ENCODE measurements at regions of chr20 and their contacts with region 1.

Region 1: DNA sequence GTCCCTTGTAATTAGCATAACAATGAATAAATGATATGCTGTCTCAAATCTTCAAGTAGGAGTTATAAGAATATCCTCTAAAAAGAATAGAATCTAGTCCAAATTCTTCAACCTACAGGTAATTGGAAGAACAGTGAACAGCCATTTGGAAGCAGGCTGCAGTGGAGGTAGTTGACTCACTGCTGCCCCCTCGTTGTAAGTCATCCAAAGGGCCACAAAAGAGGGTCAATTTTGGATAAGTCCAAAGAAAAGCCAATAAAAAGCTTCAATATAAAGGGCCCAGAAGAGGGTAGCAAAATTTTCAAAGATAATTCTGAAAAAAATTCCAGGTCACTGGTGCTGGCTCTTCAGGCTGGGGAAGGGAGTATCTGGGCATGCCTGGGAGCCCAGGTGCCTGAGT is 60.8 kb upstream of the SSTR4 start:
- DNase-seq: peak; percentile 24
- ATAC-seq: peak; percentile 69
- H3K4me3 ChIP-seq: no peak overlapping the region
- H3K27ac ChIP-seq: no peak overlapping the region
- H3K4me1 ChIP-seq: no peaks in the 10 kb centered on the region
- H3K27me3 ChIP-seq: no peaks in the 10 kb centered on the region; a peak in 1 of 5 replicates
- CTCF ChIP-seq: peak; percentile 32; the same call in 1 of the 2 replicates
- EP300 ChIP-seq: no peak
- POLR2A ChIP-seq: no peak
- RAD21 ChIP-seq: peak; percentile 44; the same call in 1 of the 2 replicates

Region 2: GRCh38 chr20:22333885-22334545 is 640.3 kb before region 1 on chr20:
- CTCF ChIA-PET with region 1: no interaction called
- POLR2A ChIA-PET with region 1: no interaction called
- in situ Hi-C with region 1: loop called (anchors 25 kb)
- intact Hi-C with region 1: loop called (anchors 5 kb)
- DNase-seq: peak; percentile 71
- ATAC-seq: peak; percentile 92
- H3K4me3 ChIP-seq: no peak overlapping the region
- H3K27ac ChIP-seq: no peak overlapping the region
- H3K4me1 ChIP-seq: no peaks in the 10 kb centered on the region
- H3K27me3 ChIP-seq: peaks cover 4 to 20% of the 10 kb centered on the region in 2 experiments; a peak in 3 of 5 replicates
- CTCF ChIP-seq: peak; percentile 90
- EP300 ChIP-seq: no peak
- POLR2A ChIP-seq: no peak
- RAD21 ChIP-seq: peak; percentile 80

Region 3: DNA sequence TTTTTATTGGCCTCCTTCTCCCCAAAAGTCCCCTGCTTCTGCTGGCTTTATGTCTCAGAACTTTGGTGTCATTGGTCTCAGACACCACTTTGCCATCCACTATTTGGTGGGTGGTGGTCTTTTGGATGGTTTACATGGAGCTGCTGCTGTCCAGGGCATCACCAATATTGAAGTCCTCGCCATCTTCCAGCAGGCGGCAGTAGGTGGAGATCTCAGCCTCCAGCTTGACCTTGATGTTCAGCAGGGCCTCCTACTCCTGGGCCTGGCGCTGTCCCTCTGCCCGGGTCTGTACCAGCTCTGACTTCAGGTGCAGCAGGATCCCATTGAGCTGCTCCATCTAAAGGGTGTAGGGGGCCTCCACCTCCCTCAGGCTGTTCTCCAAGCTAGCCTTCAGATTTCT is 241.6 kb before region 1 on chr20:
- CTCF ChIA-PET with region 1: no interaction called
- POLR2A ChIA-PET with region 1: no interaction called
- in situ Hi-C with region 1: no loop called
- intact Hi-C with region 1: loop called (anchors 5 kb)
- DNase-seq: peak; percentile 34
- ATAC-seq: no peak
- H3K4me3 ChIP-seq: no peak overlapping the region
- H3K27ac ChIP-seq: no peak overlapping the region
- H3K4me1 ChIP-seq: no peaks in the 10 kb centered on the region
- H3K27me3 ChIP-seq: no peaks in the 10 kb centered on the region
- CTCF ChIP-seq: peak; percentile 51
- EP300 ChIP-seq: no peak
- POLR2A ChIP-seq: no peak
- RAD21 ChIP-seq: no peak

Region 4: GRCh38 chr20:22846863-22847262 is 127.5 kb before region 1 on chr20:
- CTCF ChIA-PET with region 1: no interaction called
- POLR2A ChIA-PET with region 1: no interaction called
- in situ Hi-C with region 1: no loop called
- intact Hi-C with region 1: loop called (anchors 5 kb)
- DNase-seq: no peak
- ATAC-seq: no peak
- H3K4me3 ChIP-seq: no peak overlapping the region
- H3K27ac ChIP-seq: no peak overlapping the region
- H3K4me1 ChIP-seq: no peaks in the 10 kb centered on the region
- H3K27me3 ChIP-seq: no peaks in the 10 kb centered on the region
- CTCF ChIP-seq: no peak
- EP300 ChIP-seq: no peak
- POLR2A ChIP-seq: no peak
- RAD21 ChIP-seq: no peak

Region 5: DNA sequence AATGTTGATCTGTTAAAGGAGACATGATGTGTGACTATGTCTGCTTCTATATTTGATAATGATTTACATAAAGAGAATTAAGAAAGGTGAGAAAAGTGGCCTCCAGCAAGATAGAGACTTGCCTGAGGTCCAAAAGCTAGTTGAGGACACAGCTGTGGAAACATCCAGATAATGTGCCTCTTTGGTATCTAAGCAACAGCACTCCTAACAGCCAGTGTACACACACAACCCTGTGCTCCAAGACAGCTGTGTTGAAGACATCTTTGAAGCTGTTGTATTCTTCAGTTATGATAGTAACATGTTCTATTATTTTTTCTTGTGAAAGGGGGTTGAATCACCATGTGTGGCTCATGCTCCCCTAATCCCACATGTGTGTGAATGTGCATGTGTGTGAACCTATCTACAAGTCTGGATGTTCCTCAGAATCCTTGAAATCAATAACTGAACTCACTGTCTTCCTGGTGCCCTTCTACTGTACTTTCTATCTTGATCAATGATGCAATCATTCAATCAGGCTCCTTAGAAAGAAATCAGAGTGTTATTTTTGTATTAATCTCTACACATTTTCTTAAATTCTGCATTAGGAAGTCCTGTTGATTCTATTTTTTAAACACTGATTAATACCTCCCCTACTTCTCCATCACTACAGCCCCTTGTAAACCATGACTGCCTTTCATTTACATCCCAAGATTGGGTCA is 55.9 kb before region 1 on chr20:
- CTCF ChIA-PET with region 1: no interaction called
- POLR2A ChIA-PET with region 1: no interaction called
- in situ Hi-C with region 1: no loop called
- intact Hi-C with region 1: no loop called
- DNase-seq: no peak
- ATAC-seq: no peak
- H3K4me3 ChIP-seq: no peak overlapping the region
- H3K27ac ChIP-seq: no peak overlapping the region
- H3K4me1 ChIP-seq: no peaks in the 10 kb centered on the region
- H3K27me3 ChIP-seq: no peaks in the 10 kb centered on the region
- CTCF ChIP-seq: no peak
- EP300 ChIP-seq: no peak
- POLR2A ChIP-seq: no peak
- RAD21 ChIP-seq: no peak

Region 6: GRCh38 chr20:22931653-22932608 is 42.4 kb before region 1 on chr20:
- CTCF ChIA-PET with region 1: no interaction called
- POLR2A ChIA-PET with region 1: no interaction called
- in situ Hi-C with region 1: no loop called
- intact Hi-C with region 1: no loop called
- DNase-seq: peak; percentile 59
- ATAC-seq: peak; percentile 95
- H3K4me3 ChIP-seq: no peak overlapping the region
- H3K27ac ChIP-seq: no peak overlapping the region
- H3K4me1 ChIP-seq: peaks cover 8% of the 10 kb centered on the region
- H3K27me3 ChIP-seq: no peaks in the 10 kb centered on the region
- CTCF ChIP-seq: no peak
- EP300 ChIP-seq: no peak
- POLR2A ChIP-seq: no peak
- RAD21 ChIP-seq: no peak